Activated naive CD4-positive, alpha-beta T cell treated with anti-CD3 and anti-CD28 coated beads for 36 hours (primary cell): ENCODE measurements at regions of chr5 and their contacts with region 1.

Region 1: DNA sequence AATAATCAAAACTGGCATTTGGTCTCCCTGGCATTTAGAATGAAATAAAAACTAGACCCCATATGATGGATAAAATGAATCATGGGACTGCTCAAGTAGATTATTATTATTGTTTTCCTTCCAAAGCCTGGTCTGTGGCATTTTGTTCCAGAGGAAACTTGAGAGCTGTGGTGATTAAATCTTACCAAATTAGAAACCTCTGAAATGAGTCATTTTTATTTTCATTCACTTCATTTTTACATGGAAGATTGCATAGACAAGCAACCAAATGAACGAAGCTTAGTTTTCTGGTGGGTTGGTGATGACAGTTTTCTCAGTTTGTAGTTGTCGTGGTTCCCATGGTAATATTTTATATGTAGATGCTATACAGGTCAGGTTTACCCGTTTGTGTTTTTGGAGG is 23.4 kb downstream of the PAM start:
- DNase-seq: no peak
- H3K4me3 Mint-ChIP-seq: no peak overlapping the region
- H3K27ac Mint-ChIP-seq: peak overlapping the region; percentile 20
- H3K4me1 Mint-ChIP-seq: peaks cover 73% of the 10 kb centered on the region
- H3K27me3 Mint-ChIP-seq: no peaks in the 10 kb centered on the region

Region 2: GRCh38 chr5:102700120-102700831 is 78.2 kb before region 1 on chr5:
- CTCF ChIA-PET with region 1: no interaction called
- intact Hi-C with region 1: no loop called
- DNase-seq: no peak
- H3K4me3 Mint-ChIP-seq: no peak overlapping the region
- H3K27ac Mint-ChIP-seq: no peak overlapping the region
- H3K4me1 Mint-ChIP-seq: no peaks in the 10 kb centered on the region
- H3K27me3 Mint-ChIP-seq: peaks cover 7% of the 10 kb centered on the region

Region 3: GRCh38 chr5:102747386-102748166 is 30.9 kb before region 1 on chr5:
- CTCF ChIA-PET with region 1: interaction called, 14 read pairs
- intact Hi-C with region 1: loop called (anchors 1 kb)
- DNase-seq: no peak
- H3K4me3 Mint-ChIP-seq: no peak overlapping the region
- H3K27ac Mint-ChIP-seq: peak overlapping the region; percentile 25
- H3K4me1 Mint-ChIP-seq: peaks cover 28% of the 10 kb centered on the region
- H3K27me3 Mint-ChIP-seq: peaks cover 10% of the 10 kb centered on the region

Region 4: GRCh38 chr5:102767862-102768261 is 10.6 kb before region 1 on chr5:
- CTCF ChIA-PET with region 1: interaction called, 13 read pairs
- intact Hi-C with region 1: loop called (anchors 1 kb)
- DNase-seq: peak; percentile 49
- H3K4me3 Mint-ChIP-seq: no peak overlapping the region
- H3K27ac Mint-ChIP-seq: peak overlapping the region; percentile 74
- H3K4me1 Mint-ChIP-seq: peaks cover 59% of the 10 kb centered on the region
- H3K27me3 Mint-ChIP-seq: no peaks in the 10 kb centered on the region

Region 5: DNA sequence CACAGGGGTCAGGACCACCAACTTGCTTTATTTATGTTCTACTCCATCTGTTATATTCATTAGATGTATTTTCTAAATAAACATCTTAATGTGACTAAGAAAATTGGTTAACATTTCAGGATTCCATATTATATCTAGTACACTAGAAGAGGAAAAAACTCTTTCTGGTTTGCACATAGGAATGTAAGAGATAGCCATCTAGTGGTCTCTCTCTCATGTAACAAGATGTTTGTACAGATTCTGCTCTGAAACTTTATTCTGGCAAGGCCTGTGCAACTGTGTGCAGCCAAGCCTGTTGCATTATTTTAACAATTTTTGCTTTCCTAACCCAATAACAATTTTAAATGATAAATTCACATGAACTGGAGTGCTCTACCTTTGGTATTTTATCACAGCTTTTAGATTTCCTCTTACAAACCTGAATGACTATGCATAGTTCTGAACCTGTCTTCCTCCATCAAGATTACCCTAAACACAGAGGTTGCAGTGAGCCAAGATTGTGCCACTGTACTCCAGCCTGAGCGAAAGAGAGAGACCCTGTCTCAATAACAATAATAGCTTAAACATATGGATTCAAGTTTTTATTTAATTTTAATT is 193.3 kb after region 1 on chr5:
- CTCF ChIA-PET with region 1: interaction called, 3 read pairs
- intact Hi-C with region 1: loop called (anchors 1 kb)
- DNase-seq: no peak
- H3K4me3 Mint-ChIP-seq: no peak overlapping the region
- H3K27ac Mint-ChIP-seq: no peak overlapping the region
- H3K4me1 Mint-ChIP-seq: no peaks in the 10 kb centered on the region
- H3K27me3 Mint-ChIP-seq: no peaks in the 10 kb centered on the region

Region 6: DNA sequence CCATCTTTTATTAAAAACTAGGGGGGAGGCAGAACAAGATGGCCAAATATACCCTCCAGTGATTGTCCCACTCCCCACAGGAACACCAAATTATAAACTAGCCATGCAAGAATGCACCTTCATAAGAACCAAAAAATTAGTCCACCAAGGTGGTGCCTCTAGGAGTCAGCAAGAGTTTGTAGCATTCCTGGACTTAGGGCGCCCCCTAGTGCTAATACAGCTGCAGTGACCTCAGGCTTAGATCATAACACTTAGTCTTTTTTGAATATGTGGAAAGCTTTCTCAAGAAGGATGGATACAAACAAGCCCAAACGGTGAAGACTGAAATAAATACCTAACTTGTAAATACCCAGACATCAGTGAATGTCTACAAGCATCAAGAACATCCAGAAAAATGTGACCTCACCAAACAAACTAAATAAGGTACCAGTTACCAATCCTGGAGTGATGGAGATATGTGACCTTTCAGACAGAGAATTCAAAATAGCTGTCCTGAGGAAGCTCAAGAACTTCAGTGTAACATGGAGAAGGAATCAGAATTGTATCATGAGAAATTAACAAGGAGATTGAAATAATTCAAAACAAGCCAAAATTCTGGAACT is 360.9 kb after region 1 on chr5:
- CTCF ChIA-PET with region 1: no interaction called
- intact Hi-C with region 1: loop called (anchors 1 kb)
- DNase-seq: peak; percentile 92
- H3K4me3 Mint-ChIP-seq: no peak overlapping the region
- H3K27ac Mint-ChIP-seq: no peak overlapping the region
- H3K4me1 Mint-ChIP-seq: peaks cover 5% of the 10 kb centered on the region
- H3K27me3 Mint-ChIP-seq: no peaks in the 10 kb centered on the region

Region 7: DNA sequence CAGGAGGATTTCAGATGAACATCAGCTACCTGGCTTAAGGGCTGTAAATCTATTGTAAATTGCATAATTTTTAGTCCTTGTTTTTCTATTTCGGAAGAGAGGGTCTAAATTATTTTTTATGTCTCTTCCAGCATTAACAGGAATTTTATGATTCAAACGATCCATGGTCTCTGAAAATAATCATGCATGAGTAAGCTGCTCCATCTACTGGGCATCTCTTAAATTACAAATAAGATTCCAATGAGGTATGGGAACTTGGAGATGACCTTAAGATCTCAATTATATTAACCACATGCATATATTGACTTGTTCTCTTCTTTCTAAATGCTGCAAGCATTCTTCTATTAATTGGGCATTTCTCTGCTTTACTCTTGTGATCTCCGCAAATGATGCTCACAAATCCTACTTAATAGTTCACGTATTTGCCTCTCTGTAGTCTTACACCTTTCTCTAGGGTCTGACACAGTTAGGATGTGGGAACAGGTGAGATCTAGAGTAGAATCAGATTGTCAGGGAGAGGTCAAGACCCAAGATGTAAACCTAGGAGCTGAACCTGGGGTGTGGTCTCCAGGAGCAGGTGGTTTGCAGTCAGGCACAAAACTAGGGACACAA is 697.3 kb after region 1 on chr5:
- CTCF ChIA-PET with region 1: no interaction called
- intact Hi-C with region 1: loop called (anchors 10 kb)
- DNase-seq: no peak
- H3K4me3 Mint-ChIP-seq: no peak overlapping the region
- H3K27ac Mint-ChIP-seq: no peak overlapping the region
- H3K4me1 Mint-ChIP-seq: no peaks in the 10 kb centered on the region
- H3K27me3 Mint-ChIP-seq: no peaks in the 10 kb centered on the region